Heart left ventricle (tissue), 16 donors: ENCODE measurements at regions of chr16 and their contacts with region 1.

Region 1: GRCh38 chr16:49407873-49408550 is 34.4 kb downstream of the C16orf78 start:
- DNase-seq: peak; percentile 81 to 90 (median 87)
- ATAC-seq: peak; percentile 95 to 99 (median 98)
- H3K4me3 ChIP-seq: no peak overlapping the region
- H3K27ac ChIP-seq: no peak overlapping the region
- H3K4me1 ChIP-seq: peaks cover 0 to 7% (median 0%) of the 10 kb centered on the region in 12 donors
- H3K27me3 ChIP-seq: no peaks in the 10 kb centered on the region
- CTCF ChIP-seq: peak; percentile 85 to 94 (median 91)
- POLR2A ChIP-seq: no peak

Region 2: GRCh38 chr16:49484451-49484849 is 76.4 kb after region 1 on chr16:
- intact Hi-C with region 1: loop called in 1 of 10 experiments (anchors 5 kb)
- DNase-seq: peak; percentile 70 to 89 (median 77)
- ATAC-seq: peak; percentile 99 to 100 (median 100)
- H3K4me3 ChIP-seq: peak overlapping the region in 10 of 12 donors; percentile 2 to 44 (median 24)
- H3K27ac ChIP-seq: peak overlapping the region in 1 of 12 donors; percentile 34
- H3K4me1 ChIP-seq: peaks cover 0 to 13% (median 6%) of the 10 kb centered on the region in 12 donors
- H3K27me3 ChIP-seq: no peaks in the 10 kb centered on the region
- CTCF ChIP-seq: no peak
- POLR2A ChIP-seq: no peak

Region 3: DNA sequence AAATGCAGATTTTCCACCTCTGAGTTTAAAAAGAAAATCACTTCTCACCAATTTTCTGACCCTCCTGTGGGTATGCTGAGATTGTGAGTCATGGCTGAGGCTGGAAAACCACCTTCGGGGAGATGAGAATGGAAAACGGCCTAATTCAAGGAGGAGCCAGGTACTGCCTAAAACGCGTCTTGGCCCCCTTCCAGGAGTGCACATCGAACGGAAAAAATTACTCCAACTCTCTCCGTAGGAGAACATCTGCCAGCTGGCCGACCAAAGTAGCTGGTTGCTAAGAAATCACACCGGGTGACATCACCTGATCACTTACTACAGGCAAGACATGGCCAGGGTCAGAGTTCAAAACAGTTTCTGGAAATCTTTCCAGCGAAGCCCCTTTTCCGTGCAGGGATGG is 340.3 kb after region 1 on chr16:
- intact Hi-C with region 1: loop called in 1 of 10 experiments (anchors 10 kb)
- DNase-seq: peak in 3 of 5 donors; percentile 25 to 39 (median 36)
- ATAC-seq: no peak
- H3K4me3 ChIP-seq: no peak overlapping the region
- H3K27ac ChIP-seq: no peak overlapping the region
- H3K4me1 ChIP-seq: peaks cover 0 to 29% (median 10%) of the 10 kb centered on the region in 12 donors
- H3K27me3 ChIP-seq: peaks cover 0 to 13% (median 0%) of the 10 kb centered on the region in 9 donors
- CTCF ChIP-seq: no peak
- POLR2A ChIP-seq: no peak

Region 4: DNA sequence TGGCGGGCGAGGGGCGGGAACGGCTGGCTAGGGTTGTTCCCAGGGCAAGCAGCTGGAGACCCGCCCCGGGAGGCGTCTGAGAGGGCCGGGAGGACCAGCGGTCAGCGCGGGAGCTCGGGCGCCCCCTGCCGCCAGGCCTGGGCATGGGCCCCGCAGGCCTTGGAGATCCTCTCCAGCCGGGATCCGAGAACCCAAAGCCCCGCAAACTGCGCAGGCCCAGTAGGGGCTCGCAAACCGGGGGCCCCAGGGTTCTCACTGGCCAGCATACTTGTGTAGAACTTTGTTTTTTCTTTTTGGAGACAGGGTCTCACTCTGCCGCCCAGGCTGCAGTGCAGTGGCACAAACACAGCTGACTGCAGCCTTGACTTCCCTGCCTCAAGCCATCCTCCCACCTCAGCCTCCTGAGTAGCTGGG is 468.7 kb after region 1 on chr16:
- intact Hi-C with region 1: loop called in 6 of 10 experiments (anchors 1 to 5 kb)
- DNase-seq: peak; percentile 71 to 89 (median 81)
- ATAC-seq: peak; percentile 55 to 97 (median 88)
- H3K4me3 ChIP-seq: peak overlapping the region in 11 of 12 donors; percentile 18 to 56 (median 47)
- H3K27ac ChIP-seq: peak overlapping the region in 2 of 12 donors; percentile 11 to 45
- H3K4me1 ChIP-seq: peaks cover 0 to 12% (median 4%) of the 10 kb centered on the region in 12 donors
- H3K27me3 ChIP-seq: peaks cover 0 to 22% (median 6%) of the 10 kb centered on the region in 9 donors
- CTCF ChIP-seq: peak; percentile 91 to 99 (median 94)
- POLR2A ChIP-seq: no peak